ENCODE measurements at regions of chr5 and their contacts with region 1.

Region 1: GRCh38 chr5:88140856-88141752 is 127.5 kb downstream of the TMEM161B start:
- DNase-seq: peak; percentile 93
- ATAC-seq: peak; percentile 93
- H3K4me3 Mint-ChIP-seq: no peak overlapping the region
- H3K27ac Mint-ChIP-seq: no peak overlapping the region
- H3K4me1 Mint-ChIP-seq: peaks cover 20% of the 10 kb centered on the region
- H3K27me3 Mint-ChIP-seq: peaks cover 36% of the 10 kb centered on the region

Region 2: DNA sequence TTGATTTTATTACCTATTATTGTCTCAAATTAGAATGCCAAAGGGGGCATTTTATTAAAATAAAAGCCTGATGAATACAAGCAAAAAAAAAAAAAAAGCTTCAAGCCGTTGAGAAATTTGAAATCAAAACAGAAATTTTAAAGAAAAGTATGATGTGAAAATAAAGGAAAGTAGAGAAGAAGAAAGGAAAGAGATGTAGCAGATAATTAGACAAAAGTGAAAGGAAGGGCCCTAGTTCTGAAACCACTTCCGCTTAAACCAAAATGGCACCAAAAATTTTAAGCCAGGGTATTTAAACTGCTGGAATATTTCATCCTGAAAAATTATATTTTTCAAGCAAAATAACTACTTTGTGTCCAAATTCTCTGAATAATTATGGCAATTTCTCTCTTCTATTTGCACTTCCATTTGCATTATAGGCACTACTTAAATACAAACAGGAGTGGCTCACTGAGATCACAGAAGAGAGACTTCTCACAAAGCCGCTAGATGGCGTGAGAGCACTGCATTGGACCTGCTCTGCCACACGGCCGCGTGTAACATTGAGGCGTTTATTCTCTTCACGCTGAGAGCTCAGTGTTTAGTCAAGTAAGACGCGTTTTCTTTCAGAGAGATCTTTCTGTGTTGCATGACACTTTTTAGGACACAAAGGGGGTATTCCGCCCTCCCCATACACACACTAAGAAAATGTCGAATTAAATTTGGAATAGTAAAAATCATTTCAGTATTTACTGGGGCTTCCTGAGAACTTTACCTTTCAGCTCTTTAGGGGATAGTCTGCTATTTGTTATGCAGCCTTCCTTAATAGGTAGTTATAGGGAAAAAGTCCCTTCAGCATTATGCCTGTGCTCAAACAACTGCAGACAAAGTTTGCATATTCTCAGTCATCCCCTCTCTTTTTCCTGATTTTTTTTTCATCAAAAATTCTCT is 360.0 kb before region 1 on chr5:
- CTCF ChIA-PET with region 1: interaction called, 3 read pairs
- POLR2A ChIA-PET with region 1: no interaction called
- intact Hi-C with region 1: loop called (anchors 2 to 5 kb)
- DNase-seq: peak; percentile 88
- ATAC-seq: peak; percentile 96
- H3K4me3 Mint-ChIP-seq: no peak overlapping the region
- H3K27ac Mint-ChIP-seq: no peak overlapping the region
- H3K4me1 Mint-ChIP-seq: no peaks in the 10 kb centered on the region
- H3K27me3 Mint-ChIP-seq: peaks cover 18% of the 10 kb centered on the region

Region 3: GRCh38 chr5:88183255-88183654 is 42.2 kb after region 1 on chr5:
- CTCF ChIA-PET with region 1: no interaction called
- POLR2A ChIA-PET with region 1: no interaction called
- intact Hi-C with region 1: no loop called
- DNase-seq: no peak
- ATAC-seq: peak; percentile 57
- H3K4me3 Mint-ChIP-seq: no peak overlapping the region
- H3K27ac Mint-ChIP-seq: no peak overlapping the region
- H3K4me1 Mint-ChIP-seq: peaks cover 7% of the 10 kb centered on the region
- H3K27me3 Mint-ChIP-seq: no peaks in the 10 kb centered on the region

Region 4: DNA sequence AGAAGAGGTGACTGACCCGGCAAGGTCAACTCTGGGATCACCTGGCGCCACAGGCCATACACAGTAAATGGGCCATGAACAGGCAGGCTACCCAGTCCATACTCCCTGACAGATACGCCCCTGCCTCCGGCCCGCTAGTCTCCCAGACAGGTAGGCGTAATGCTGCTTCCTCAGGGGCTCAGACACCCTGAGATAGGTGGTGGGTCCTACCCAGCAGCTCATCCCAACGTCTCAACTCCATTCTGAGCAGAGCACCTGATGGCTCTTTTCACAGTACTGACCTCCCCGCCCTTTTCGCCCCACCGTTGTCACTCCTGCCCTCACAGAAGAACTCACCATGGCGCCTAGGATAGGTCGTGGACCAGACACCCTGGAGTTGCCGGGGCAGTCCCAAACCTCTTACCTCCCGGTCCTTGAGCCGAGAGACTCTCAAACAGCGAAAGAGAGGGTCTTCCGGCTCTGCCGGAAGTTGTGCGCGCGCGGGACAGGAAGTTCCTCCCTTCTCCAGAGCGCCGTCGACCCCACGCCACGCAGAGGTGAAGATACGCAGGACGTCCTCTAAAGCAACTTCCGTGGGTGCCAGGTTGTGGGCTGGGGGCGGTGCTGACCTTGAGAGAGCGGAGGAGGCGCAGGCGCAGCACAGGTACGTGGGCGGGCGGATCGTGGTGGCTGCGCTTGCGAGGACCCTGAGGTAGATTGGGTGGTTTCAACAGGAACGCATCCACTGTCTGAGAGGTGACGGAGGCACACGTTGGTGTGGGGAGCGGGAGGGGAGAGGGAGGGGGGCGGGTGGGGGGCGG is 127.5 kb after region 1 on chr5 and contains the start of gene TMEM161B:
- CTCF ChIA-PET with region 1: no interaction called
- POLR2A ChIA-PET with region 1: no interaction called
- intact Hi-C with region 1: loop called (anchors 1 to 2 kb)
- DNase-seq: peak; percentile 96
- ATAC-seq: peak; percentile 98
- H3K4me3 Mint-ChIP-seq: peak within 1 kb of the TSS; percentile 95
- H3K27ac Mint-ChIP-seq: peak within 1 kb of the TSS; percentile 96
- H3K4me1 Mint-ChIP-seq: peaks cover 48% of the 10 kb centered on the region
- H3K27me3 Mint-ChIP-seq: no peaks in the 10 kb centered on the region
- total RNA-seq, gene TMEM161B: 20.1 to 24.0 TPM

Region 5: GRCh38 chr5:88502179-88503040 is 361.3 kb after region 1 on chr5:
- CTCF ChIA-PET with region 1: no interaction called
- POLR2A ChIA-PET with region 1: no interaction called
- intact Hi-C with region 1: loop called in 1 of 2 experiments (anchors 5 kb)
- DNase-seq: peak; percentile 8
- ATAC-seq: peak; percentile 77
- H3K4me3 Mint-ChIP-seq: peak overlapping the region; percentile 76
- H3K27ac Mint-ChIP-seq: peak overlapping the region; percentile 87
- H3K4me1 Mint-ChIP-seq: peaks cover 10% of the 10 kb centered on the region
- H3K27me3 Mint-ChIP-seq: peaks cover 1% of the 10 kb centered on the region

Region 6: GRCh38 chr5:88602584-88602983 is 461.5 kb after region 1 on chr5:
- CTCF ChIA-PET with region 1: no interaction called
- POLR2A ChIA-PET with region 1: no interaction called
- intact Hi-C with region 1: loop called in 1 of 2 experiments (anchors 5 kb)
- DNase-seq: peak; percentile 56
- ATAC-seq: no peak
- H3K4me3 Mint-ChIP-seq: no peak overlapping the region
- H3K27ac Mint-ChIP-seq: no peak overlapping the region
- H3K4me1 Mint-ChIP-seq: no peaks in the 10 kb centered on the region
- H3K27me3 Mint-ChIP-seq: peaks cover 7% of the 10 kb centered on the region

Region 7: GRCh38 chr5:88660947-88661805 is 520.1 kb after region 1 on chr5:
- CTCF ChIA-PET with region 1: interaction called, 3 read pairs
- POLR2A ChIA-PET with region 1: no interaction called
- intact Hi-C with region 1: loop called in 1 of 2 experiments (anchors 2 kb)
- DNase-seq: peak; percentile 71
- ATAC-seq: peak; percentile 72
- H3K4me3 Mint-ChIP-seq: peak overlapping the region; percentile 43
- H3K27ac Mint-ChIP-seq: no peak overlapping the region
- H3K4me1 Mint-ChIP-seq: peaks cover 16% of the 10 kb centered on the region
- H3K27me3 Mint-ChIP-seq: peaks cover 54% of the 10 kb centered on the region

Measured in activated CD4-positive, alpha-beta T cell treated with anti-CD3 and anti-CD28 coated beads for 36 hours (primary cell).